ENCODE measurements at regions of chr6 and their contacts with region 1.

Region 1: DNA sequence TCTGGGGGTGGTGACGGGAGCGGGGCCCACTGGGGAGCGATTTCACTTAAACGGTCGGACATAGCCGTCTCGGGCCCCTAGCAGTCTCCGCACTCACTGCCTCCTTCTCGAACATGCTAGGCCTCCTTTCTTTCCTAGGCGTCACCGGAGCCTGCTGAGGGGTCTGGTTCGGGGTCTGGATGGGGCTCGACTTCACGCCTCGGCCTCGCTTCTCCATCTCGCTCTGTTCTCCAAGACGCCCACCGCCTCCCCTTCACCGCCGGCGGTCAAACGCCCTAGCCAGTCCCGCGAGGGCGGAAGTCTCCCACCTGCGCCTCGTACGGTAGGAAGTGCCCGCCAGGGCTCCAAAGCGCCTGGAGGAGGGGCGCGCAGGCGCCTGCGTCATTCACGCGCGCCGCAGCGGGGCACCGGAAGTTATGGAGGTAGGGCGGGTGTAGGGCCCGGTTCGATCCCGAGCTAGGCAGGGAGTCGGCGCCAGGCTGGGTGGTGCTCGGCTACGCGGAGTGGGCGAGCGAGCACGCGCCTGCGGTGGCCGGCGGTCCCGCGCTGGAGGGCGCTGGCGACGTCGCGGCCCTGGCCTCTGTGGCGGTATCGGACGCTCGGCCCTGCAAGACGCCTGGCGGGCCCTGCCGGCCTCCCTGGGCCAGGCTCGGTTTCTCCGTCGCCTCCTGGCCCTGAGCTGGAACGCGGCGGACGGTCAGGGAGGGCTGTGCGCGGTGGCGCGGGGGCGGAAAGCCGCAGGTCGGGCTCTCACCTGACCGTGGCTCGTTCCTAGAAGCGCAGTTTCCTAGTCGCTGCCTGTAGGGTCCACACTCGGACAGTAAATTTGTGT is at the starts of genes DYNLT2 and ERMARD:
- DNase-seq: peak; percentile 95
- H3K4me3 Mint-ChIP-seq: peak within 1 kb of the TSS; percentile 98
- H3K27ac Mint-ChIP-seq: peak within 1 kb of the TSS; percentile 95
- H3K4me1 Mint-ChIP-seq: peaks cover 32% of the 10 kb centered on the region
- H3K27me3 Mint-ChIP-seq: no peaks in the 10 kb centered on the region
- total RNA-seq, gene DYNLT2: 1.7 to 2.2 TPM
- total RNA-seq, gene ERMARD: 29.3 to 30.7 TPM

Region 2: DNA sequence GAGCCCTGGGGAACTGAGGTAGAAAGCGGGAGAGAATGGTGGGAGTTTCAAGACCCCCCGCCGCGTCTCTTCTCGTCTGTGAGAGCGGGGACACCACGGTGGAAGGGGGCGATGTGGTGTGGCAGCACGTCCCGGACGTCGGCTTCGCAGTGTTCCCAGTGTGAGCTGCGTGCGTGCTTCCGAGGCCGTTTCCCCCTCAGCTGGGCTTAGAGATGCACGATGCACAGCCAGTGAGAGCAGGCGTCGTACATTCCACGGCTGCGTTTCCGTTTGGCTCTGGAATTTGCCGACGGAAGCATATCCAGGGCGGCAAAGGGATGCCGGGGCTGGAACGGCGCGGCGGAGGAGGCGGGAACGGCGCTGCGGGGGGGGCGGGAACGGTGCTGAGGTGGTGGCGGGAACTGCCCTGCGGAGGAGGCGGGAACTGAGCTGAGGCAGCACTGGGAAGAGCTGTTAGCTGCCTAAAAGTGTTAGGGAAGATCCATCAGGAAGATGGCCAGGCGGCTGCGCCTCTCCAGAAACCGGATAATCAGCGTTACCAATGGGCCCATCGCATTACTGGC is 1716.3 kb before region 1 on chr6:
- CTCF ChIA-PET with region 1: no interaction called
- POLR2A ChIA-PET with region 1: no interaction called
- DNase-seq: no peak
- H3K4me3 Mint-ChIP-seq: peak overlapping the region; percentile 65
- H3K27ac Mint-ChIP-seq: no peak overlapping the region
- H3K4me1 Mint-ChIP-seq: peaks cover 10% of the 10 kb centered on the region
- H3K27me3 Mint-ChIP-seq: peaks cover 19% of the 10 kb centered on the region

Region 3: GRCh38 chr6:169345146-169345545 is 406.3 kb before region 1 on chr6:
- CTCF ChIA-PET with region 1: no interaction called
- POLR2A ChIA-PET with region 1: no interaction called
- DNase-seq: no peak
- H3K4me3 Mint-ChIP-seq: no peak overlapping the region
- H3K27ac Mint-ChIP-seq: no peak overlapping the region
- H3K4me1 Mint-ChIP-seq: no peaks in the 10 kb centered on the region
- H3K27me3 Mint-ChIP-seq: peaks cover 4% of the 10 kb centered on the region

Region 4: GRCh38 chr6:169701954-169702839 is 49.3 kb before region 1 on chr6 and contains the starts of genes C6orf120 and WDR27:
- CTCF ChIA-PET with region 1: interaction called, 3 read pairs
- POLR2A ChIA-PET with region 1: interaction called, 82 read pairs
- DNase-seq: peak; percentile 97
- H3K4me3 Mint-ChIP-seq: peak within 1 kb of the TSS; percentile 89
- H3K27ac Mint-ChIP-seq: peak within 1 kb of the TSS; percentile 86
- H3K4me1 Mint-ChIP-seq: peaks cover 56% of the 10 kb centered on the region
- H3K27me3 Mint-ChIP-seq: no peaks in the 10 kb centered on the region
- total RNA-seq, gene C6orf120: 19.2 to 19.6 TPM
- total RNA-seq, gene WDR27: 24.9 to 25.2 TPM

Region 5: DNA sequence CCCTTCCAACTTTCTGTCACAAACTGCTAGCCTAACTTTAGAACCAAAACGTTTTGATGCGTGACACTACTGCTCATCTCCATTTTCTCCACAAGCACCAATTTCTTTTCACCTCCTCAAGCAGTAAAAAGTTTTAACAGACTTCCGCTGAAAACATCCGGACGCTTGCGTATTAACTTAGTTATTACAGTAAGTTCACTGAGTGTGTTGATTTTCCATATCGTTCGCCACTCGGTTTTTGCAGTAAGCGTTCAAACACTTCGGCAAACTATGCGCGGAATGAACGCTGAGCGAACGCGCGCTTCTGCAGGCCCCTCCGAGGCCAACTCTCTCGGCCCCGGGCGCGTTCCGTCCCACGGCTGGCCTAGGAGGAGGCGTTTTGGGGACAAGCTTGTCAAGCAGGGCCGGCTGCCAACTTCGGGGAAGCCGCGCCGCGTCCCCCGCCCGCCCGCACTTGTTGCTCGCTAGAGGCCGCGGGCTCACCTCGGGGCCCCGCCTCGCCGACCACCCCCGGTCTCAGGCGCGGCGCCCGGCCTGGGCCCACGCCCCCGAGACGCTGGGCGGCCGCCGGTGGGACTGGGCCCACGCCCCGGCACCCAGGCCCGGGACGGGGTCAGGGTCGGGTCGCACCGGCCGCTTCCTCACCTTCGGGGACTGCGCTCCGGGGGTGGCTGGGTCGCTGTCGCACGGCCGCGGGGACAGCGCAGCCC is 28.1 kb before region 1 on chr6:
- CTCF ChIA-PET with region 1: interaction called, 3 read pairs
- POLR2A ChIA-PET with region 1: interaction called, 111 read pairs
- DNase-seq: peak; percentile 66
- H3K4me3 Mint-ChIP-seq: peak overlapping the region; percentile 85
- H3K27ac Mint-ChIP-seq: peak overlapping the region; percentile 95
- H3K4me1 Mint-ChIP-seq: peaks cover 43% of the 10 kb centered on the region
- H3K27me3 Mint-ChIP-seq: peaks cover 2% of the 10 kb centered on the region

Region 6: DNA sequence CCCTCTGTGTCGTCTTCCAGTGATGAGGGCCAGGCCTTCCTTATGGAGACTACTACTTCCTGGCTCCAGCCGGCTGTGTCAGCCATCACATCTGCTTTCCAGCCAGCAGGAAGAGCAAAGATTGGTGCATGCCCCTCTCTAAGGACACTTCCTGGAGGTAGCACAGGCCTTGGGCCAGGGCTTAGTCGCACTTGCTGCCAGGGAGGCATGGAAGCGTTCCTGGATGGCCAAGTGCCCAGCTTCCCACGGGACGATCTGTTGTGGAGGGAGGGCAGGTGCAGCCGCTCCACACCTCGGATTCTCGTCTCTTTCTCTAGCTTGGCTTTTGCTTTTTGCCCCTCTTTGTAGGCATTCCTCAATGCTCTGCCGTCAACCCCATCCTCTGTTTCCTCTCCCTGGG is 11.8 kb after region 1 on chr6:
- CTCF ChIA-PET with region 1: no interaction called
- POLR2A ChIA-PET with region 1: interaction called, 12 read pairs
- DNase-seq: no peak
- H3K4me3 Mint-ChIP-seq: no peak overlapping the region
- H3K27ac Mint-ChIP-seq: no peak overlapping the region
- H3K4me1 Mint-ChIP-seq: no peaks in the 10 kb centered on the region
- H3K27me3 Mint-ChIP-seq: no peaks in the 10 kb centered on the region

Region 7: DNA sequence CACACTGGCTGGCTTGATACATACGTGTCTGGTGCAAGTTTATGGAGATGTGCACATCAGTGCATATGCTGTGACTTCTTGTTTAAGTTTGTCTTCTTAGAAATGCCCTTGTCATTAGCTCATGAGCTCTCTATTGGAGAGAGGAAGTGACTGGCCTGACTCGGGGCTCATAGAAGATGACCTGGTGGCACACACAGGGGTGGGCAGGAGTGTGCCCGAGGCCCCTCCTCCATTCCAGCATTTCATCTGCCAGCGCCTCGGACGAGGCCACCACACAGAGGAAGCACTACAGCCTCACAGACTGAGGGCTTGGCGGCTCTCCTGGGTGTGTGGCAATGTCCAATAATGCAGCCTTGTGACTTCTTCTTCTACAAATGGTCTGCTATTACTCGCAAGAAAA is 664.8 kb after region 1 on chr6:
- CTCF ChIA-PET with region 1: no interaction called
- POLR2A ChIA-PET with region 1: no interaction called
- DNase-seq: no peak
- H3K4me3 Mint-ChIP-seq: no peak overlapping the region
- H3K27ac Mint-ChIP-seq: no peak overlapping the region
- H3K4me1 Mint-ChIP-seq: no peaks in the 10 kb centered on the region
- H3K27me3 Mint-ChIP-seq: peaks cover 15% of the 10 kb centered on the region

Region 8: DNA sequence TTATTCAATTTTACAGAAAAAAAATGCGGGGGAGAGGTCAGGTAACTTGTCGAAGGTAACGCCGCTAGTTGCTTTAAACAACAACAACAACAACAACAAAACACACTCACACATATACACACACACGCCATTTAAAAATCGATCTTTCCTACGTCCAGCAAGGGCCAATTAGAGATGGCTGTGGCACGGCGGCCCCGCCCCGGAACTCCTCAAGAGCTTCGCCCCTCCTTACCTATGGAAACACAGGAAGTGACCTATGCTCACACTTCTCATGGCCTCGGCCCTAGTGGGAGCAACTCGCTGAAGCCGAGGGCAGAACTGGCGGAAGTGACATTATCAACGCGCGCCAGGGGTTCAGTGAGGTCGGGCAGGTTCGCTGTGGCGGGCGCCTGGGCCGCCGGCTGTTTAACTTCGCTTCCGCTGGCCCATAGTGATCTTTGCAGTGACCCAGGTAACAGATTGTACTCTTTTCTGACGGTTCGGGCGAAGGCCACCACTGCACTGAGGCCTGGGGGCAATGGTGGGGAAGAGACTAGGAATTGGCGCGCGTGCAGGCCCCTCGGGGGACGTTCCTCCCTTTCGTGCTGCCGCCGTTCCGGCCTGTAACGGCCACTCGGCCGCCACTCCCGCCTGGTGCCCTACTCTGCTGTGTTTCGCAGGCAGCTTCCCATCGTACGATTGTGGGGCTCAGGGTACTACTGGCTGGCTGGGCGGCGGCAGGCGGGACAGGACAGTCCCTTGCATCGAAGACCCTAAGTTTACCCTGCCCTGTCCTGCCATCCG is 802.7 kb after region 1 on chr6 and contains the start of gene TBP:
- CTCF ChIA-PET with region 1: interaction called, 3 read pairs
- POLR2A ChIA-PET with region 1: interaction called, 31 read pairs
- DNase-seq: peak; percentile 98
- H3K4me3 Mint-ChIP-seq: no peak within 1 kb of the TSS
- H3K27ac Mint-ChIP-seq: no peak within 1 kb of the TSS
- H3K4me1 Mint-ChIP-seq: peaks cover 42% of the 10 kb centered on the region
- H3K27me3 Mint-ChIP-seq: no peaks in the 10 kb centered on the region
- total RNA-seq, gene TBP: 19.1 to 19.6 TPM